ENCODE measurements at regions of chr2 and their contacts with region 1.

Region 1: GRCh38 chr2:25606892-25607291 is 66.5 kb downstream of the DTNB start:
- DNase-seq: peak in 1 of 4 donors; percentile 43
- ATAC-seq: peak; percentile 75
- H3K4me3 ChIP-seq: no peak overlapping the region
- H3K27ac ChIP-seq: no peak overlapping the region
- H3K4me1 ChIP-seq: no peaks in the 10 kb centered on the region
- H3K27me3 ChIP-seq: no peaks in the 10 kb centered on the region
- CTCF ChIP-seq: peak in 1 of 2 donors; percentile 54

Region 2: GRCh38 chr2:25664183-25664964 is 57.5 kb after region 1 on chr2:
- intact Hi-C with region 1: loop called in 1 of 2 experiments (anchors 10 kb)
- DNase-seq: peak in 3 of 4 donors; percentile 58 to 74 (median 60)
- ATAC-seq: peak; percentile 98
- H3K4me3 ChIP-seq: no peak overlapping the region
- H3K27ac ChIP-seq: no peak overlapping the region
- H3K4me1 ChIP-seq: peaks cover 0 to 13% of the 10 kb centered on the region in 2 donors
- H3K27me3 ChIP-seq: no peaks in the 10 kb centered on the region
- CTCF ChIP-seq: peak; percentile 53 to 62

Region 3: GRCh38 chr2:26414311-26414710 is 807.4 kb after region 1 on chr2:
- intact Hi-C with region 1: no loop called
- DNase-seq: no peak
- ATAC-seq: no peak
- H3K4me3 ChIP-seq: no peak overlapping the region
- H3K27ac ChIP-seq: no peak overlapping the region
- H3K4me1 ChIP-seq: no peaks in the 10 kb centered on the region
- H3K27me3 ChIP-seq: no peaks in the 10 kb centered on the region
- CTCF ChIP-seq: no peak

Measured in left lung (tissue), 14 donors.